PC-3 (cell line): ENCODE measurements at regions of chr3 and their contacts with region 1.

Region 1: GRCh38 chr3:27712136-27713077 is 9.7 kb downstream of the EOMES start:
- DNase-seq: peak; percentile 84
- ATAC-seq: peak; percentile 82
- H3K4me3 ChIP-seq: peak overlapping the region; percentile 78
- H3K27ac ChIP-seq: no peak overlapping the region
- H3K4me1 ChIP-seq: peaks cover 19% of the 10 kb centered on the region
- H3K27me3 ChIP-seq: peaks cover 12% of the 10 kb centered on the region; the same call in 1 of the 2 replicates
- CTCF ChIP-seq: peak; percentile 86

Region 2: DNA sequence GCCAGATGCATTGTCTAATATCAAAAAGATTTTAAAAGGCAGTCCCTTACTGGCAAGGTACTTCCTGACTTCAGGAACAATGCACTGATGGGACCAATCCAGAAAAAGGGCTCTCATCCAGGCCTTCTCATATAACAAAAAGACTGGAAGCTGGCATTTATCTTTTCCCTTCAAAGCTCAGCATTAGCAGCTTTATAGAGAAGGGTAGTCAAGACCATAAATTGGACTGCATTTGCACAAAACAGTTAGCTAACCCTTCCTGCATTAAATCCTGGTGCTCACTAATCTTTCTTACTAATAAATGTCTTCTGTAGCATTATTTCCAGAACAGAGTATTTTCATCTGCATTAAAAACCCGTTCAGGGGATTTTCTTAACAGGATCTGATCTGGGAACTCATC is 297.2 kb before region 1 on chr3:
- CTCF ChIA-PET with region 1: interaction called, 19 read pairs
- POLR2A ChIA-PET with region 1: no interaction called
- intact Hi-C with region 1: no loop called
- DNase-seq: no peak
- ATAC-seq: no peak
- H3K4me3 ChIP-seq: no peak overlapping the region
- H3K27ac ChIP-seq: no peak overlapping the region
- H3K4me1 ChIP-seq: no peaks in the 10 kb centered on the region
- H3K27me3 ChIP-seq: no peaks in the 10 kb centered on the region
- CTCF ChIP-seq: no peak

Region 3: GRCh38 chr3:27696906-27697305 is 15.5 kb before region 1 on chr3:
- CTCF ChIA-PET with region 1: interaction called, 10 read pairs
- POLR2A ChIA-PET with region 1: no interaction called
- intact Hi-C with region 1: no loop called
- DNase-seq: peak; percentile 88
- ATAC-seq: peak; percentile 100
- H3K4me3 ChIP-seq: no peak overlapping the region
- H3K27ac ChIP-seq: no peak overlapping the region; the same call in 1 of the 2 replicates
- H3K4me1 ChIP-seq: peaks cover 7% of the 10 kb centered on the region; the same call in 1 of the 2 replicates
- H3K27me3 ChIP-seq: no peaks in the 10 kb centered on the region
- CTCF ChIP-seq: no peak

Region 4: GRCh38 chr3:28022916-28023315 is 310.5 kb after region 1 on chr3:
- CTCF ChIA-PET with region 1: interaction called, 14 read pairs
- POLR2A ChIA-PET with region 1: no interaction called
- intact Hi-C with region 1: loop called (anchors 5 kb)
- DNase-seq: peak; percentile 93
- ATAC-seq: peak; percentile 83
- H3K4me3 ChIP-seq: no peak overlapping the region
- H3K27ac ChIP-seq: peak overlapping the region; percentile 73
- H3K4me1 ChIP-seq: peaks cover 22% of the 10 kb centered on the region
- H3K27me3 ChIP-seq: no peaks in the 10 kb centered on the region
- CTCF ChIP-seq: no peak

Region 5: DNA sequence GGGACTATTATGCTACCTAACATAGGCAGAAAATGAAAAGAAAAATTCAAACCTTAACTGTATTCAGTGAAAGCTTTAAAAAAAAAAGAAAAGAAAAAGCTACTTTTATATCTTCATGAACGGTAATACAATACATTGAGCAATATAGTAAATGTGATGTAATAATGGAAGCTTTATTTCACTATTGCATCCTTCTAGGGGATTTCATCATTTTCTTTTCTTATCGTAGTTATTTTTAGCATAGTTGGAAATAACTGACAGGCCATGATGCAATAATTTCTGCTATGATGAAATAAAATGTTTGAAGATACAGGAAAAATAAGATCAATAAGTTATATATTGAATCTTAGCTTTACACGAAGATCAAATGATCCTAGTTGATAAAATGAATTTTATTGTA is 595.8 kb after region 1 on chr3:
- CTCF ChIA-PET with region 1: interaction called, 16 read pairs
- POLR2A ChIA-PET with region 1: no interaction called
- intact Hi-C with region 1: no loop called
- DNase-seq: no peak
- ATAC-seq: no peak
- H3K4me3 ChIP-seq: no peak overlapping the region
- H3K27ac ChIP-seq: no peak overlapping the region
- H3K4me1 ChIP-seq: no peaks in the 10 kb centered on the region
- H3K27me3 ChIP-seq: no peaks in the 10 kb centered on the region
- CTCF ChIP-seq: no peak